ENCODE measurements at regions of chr6 and their contacts with region 1.

Region 1: GRCh38 chr6:108874470-108875160 is 26.4 kb downstream of the ARMC2 start:
- DNase-seq: peak; percentile 80
- H3K4me3 Mint-ChIP-seq: peak overlapping the region; percentile 20
- H3K27ac Mint-ChIP-seq: no peak overlapping the region
- H3K4me1 Mint-ChIP-seq: peaks cover 22% of the 10 kb centered on the region
- H3K27me3 Mint-ChIP-seq: peaks cover 2% of the 10 kb centered on the region

Region 2: DNA sequence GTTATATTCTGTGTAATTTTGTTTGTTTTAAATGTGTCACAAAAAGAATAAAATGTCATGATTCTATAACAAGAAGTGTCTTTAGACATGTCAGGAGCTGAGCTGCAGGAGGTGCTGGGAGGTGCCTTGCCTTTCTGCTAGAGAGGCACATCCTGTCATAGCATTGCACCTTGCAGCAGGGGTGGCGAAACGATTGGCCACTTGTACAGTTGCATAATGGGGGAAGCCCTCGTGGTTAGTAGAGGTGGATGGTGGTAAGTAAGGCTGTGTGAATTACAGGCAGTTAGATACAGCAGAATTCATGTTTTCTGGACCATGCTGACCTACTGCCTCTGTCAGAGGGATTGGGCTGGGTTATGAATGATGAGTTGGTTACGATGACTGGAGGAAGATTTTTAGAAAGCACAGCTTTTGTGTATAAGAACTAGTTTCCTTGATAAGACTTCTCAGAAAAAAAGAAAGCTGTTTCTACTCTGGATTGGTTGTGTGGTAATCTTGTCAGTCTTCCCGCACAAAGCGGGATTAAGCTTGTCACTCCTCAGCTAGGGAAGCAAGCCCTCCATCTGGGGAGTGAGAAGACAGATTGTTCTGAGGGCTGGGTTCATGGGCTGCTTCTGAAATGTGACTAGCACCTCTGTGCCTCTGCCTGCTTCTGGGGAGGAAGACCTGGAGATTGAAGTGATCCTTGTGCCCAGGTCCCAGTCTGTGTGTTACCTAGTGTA is 238.9 kb before region 1 on chr6:
- CTCF ChIA-PET with region 1: no interaction called
- intact Hi-C with region 1: loop called (anchors 10 kb)
- DNase-seq: peak; percentile 76
- H3K4me3 Mint-ChIP-seq: no peak overlapping the region
- H3K27ac Mint-ChIP-seq: no peak overlapping the region
- H3K4me1 Mint-ChIP-seq: peaks cover 45% of the 10 kb centered on the region
- H3K27me3 Mint-ChIP-seq: no peaks in the 10 kb centered on the region

Region 3: GRCh38 chr6:108825326-108825725 is 49.3 kb before region 1 on chr6:
- CTCF ChIA-PET with region 1: no interaction called
- intact Hi-C with region 1: no loop called
- DNase-seq: no peak
- H3K4me3 Mint-ChIP-seq: no peak overlapping the region
- H3K27ac Mint-ChIP-seq: no peak overlapping the region
- H3K4me1 Mint-ChIP-seq: no peaks in the 10 kb centered on the region
- H3K27me3 Mint-ChIP-seq: no peaks in the 10 kb centered on the region

Region 4: DNA sequence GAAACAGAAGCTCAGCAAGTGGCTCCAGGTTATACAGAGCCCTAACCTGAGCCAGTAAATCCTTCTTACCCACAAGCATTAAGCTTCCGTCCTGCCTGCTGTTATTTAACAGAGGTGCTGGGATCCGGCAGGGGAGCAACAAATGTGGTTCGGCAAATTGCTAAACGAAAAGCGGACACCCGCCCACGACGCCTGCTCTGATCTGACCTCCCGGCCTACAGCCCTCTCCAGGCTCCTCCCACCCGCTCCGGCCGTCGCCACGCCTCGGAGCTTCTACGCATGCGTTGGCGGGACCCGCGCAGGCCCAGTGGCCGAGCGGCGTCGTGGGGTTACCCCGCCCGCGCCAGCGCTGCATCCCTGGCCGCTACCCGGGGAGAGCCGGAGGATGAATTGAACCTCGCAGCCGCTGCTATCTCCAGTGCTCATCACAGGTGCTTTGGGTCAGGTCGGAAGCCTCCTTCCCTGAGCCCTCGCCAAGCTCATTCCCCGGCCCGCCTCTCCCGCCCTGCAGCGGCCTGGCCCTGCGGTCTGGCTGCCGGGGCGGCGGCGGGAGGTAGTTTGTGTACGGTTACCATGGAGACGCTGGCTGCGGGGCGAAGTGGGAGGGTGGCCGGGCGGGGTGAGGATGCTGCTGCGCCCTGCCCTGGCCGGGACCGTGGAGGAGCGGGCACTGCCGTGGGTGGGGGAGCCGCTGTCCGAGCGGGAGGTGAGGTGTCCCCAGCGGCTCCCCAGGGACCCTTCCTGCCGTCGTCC is 26.3 kb before region 1 on chr6 and contains the start of gene ARMC2:
- CTCF ChIA-PET with region 1: interaction called, 3 read pairs
- intact Hi-C with region 1: loop called (anchors 2 kb)
- DNase-seq: peak; percentile 87
- H3K4me3 Mint-ChIP-seq: peak within 1 kb of the TSS; percentile 82
- H3K27ac Mint-ChIP-seq: peak within 1 kb of the TSS; percentile 28
- H3K4me1 Mint-ChIP-seq: peaks cover 20% of the 10 kb centered on the region
- H3K27me3 Mint-ChIP-seq: no peaks in the 10 kb centered on the region
- total RNA-seq, gene ARMC2: 3.6 to 3.9 TPM

Region 5: DNA sequence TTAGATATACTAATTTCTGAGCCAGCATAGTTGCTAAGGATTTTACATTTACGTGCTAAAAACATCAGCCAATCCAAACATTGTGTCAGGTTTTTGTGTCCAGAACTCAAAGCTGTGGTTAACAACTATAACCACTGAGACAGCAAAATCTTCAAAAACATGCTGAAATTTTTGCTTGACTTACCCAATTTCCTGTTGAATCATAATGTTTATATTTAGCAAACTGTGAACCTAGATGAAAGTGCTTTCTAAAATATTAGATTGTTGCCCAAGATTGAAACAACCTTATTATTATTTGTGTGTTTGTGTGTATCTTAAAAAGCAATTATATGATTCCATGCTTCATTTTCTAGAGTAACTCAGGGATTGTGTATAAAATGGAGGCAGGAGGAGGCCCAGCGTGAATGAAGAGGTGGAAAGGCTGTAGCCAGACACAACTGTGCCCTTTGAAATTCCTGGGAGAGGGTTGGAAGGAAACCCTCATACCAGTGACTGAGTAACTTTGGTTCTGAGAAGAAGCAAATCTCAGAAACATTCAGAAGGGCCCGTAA is 21.6 kb after region 1 on chr6:
- CTCF ChIA-PET with region 1: no interaction called
- intact Hi-C with region 1: loop called (anchors 2 kb)
- DNase-seq: no peak
- H3K4me3 Mint-ChIP-seq: no peak overlapping the region
- H3K27ac Mint-ChIP-seq: no peak overlapping the region
- H3K4me1 Mint-ChIP-seq: peaks cover 12% of the 10 kb centered on the region
- H3K27me3 Mint-ChIP-seq: no peaks in the 10 kb centered on the region

Region 6: DNA sequence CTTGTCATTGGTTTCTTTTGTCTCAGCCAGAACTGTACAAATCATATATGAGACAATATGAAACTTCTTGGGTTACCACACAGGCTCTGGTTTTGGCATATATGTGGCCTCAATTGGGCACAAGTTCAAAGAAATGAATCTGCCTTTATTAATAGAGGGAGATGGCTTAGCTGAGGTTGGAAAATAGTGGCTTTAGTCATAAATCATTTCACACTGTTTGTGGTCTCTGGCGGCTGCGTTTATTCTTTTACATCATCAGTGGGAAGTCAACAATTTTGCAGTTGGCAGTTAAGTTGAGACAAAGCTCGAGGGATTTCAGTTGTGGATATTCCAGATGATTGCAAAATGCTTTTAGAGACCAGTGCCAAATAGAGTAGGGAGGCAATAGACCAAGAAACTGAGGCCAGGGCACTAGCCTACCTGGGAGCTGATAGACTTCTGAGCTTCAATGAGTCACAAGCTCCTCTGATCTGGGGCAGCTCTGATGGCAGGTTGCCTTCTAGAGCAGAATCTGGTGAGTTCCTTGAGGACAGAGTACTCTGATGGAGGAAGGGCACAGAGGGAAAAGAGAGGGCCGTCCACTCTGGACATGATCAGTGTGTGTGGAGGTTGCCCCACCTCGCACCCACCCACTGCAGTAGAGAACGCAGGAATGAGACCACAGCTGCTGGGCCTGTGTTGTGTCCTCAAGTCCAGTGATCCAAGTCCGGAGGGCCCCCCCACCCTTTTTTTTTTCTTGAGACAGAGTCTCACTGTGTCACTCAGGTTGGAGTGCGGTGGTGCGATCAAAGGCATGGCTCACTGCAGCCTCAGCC is 47.1 kb after region 1 on chr6:
- CTCF ChIA-PET with region 1: interaction called, 6 read pairs
- intact Hi-C with region 1: loop called (anchors 1 kb)
- DNase-seq: peak; percentile 43
- H3K4me3 Mint-ChIP-seq: no peak overlapping the region
- H3K27ac Mint-ChIP-seq: no peak overlapping the region
- H3K4me1 Mint-ChIP-seq: peaks cover 27% of the 10 kb centered on the region
- H3K27me3 Mint-ChIP-seq: no peaks in the 10 kb centered on the region

Measured in activated naive CD4-positive, alpha-beta T cell treated with anti-CD3 and anti-CD28 coated beads for 36 hours (primary cell).